ENCODE measurements at regions of chr17 and their contacts with region 1.

Region 1: GRCh38 chr17:8887834-8888703 is 20.6 kb upstream of the PIK3R6 start:
- DNase-seq: peak; percentile 69 to 84
- ATAC-seq: peak; percentile 85 to 96
- H3K4me3 ChIP-seq: no peak overlapping the region
- H3K27ac ChIP-seq: 0 out of 6 replicates have a peak overlapping the region, but pooled peaks of 1 of the 2 experiments have one; percentile 11
- H3K4me1 ChIP-seq: 0 out of 3 replicates have a peak, but pooled peaks cover 3% of the 10 kb centered on the region
- CTCF ChIP-seq: peak; percentile 65; the same call in 2 of the 3 replicates
- EP300 ChIP-seq: no peak
- POLR2A ChIP-seq: no peak
- RAD21 ChIP-seq: peak; percentile 72 to 75

Region 2: DNA sequence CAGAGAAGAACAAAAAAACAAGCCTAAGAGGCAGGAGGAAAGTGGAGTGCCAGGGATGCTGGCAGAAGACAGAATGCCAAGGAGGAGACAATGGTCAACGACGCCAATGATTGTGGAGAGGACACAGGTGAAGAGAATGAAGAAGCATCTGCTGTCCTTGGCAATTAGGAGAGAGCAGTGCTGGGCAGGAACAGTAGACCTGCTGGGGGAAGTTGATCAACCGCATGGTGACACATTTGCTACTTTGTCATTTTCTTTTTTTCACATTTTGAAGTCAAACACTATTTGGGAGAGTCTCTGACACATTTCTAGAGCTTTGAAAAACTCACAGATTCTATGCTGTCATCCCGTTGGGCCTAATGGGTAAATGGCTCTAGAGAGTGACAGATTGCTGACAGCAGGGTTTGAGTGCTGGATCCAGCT is 19.5 kb before region 1 on chr17:
- CTCF ChIA-PET with region 1: interaction called, 31 read pairs
- POLR2A ChIA-PET with region 1: no interaction called
- DNase-seq: no peak
- ATAC-seq: no peak
- H3K4me3 ChIP-seq: no peak overlapping the region
- H3K27ac ChIP-seq: no peak overlapping the region
- H3K4me1 ChIP-seq: peaks cover 7% of the 10 kb centered on the region
- CTCF ChIP-seq: no peak
- EP300 ChIP-seq: no peak
- POLR2A ChIP-seq: no peak
- RAD21 ChIP-seq: no peak

Region 3: DNA sequence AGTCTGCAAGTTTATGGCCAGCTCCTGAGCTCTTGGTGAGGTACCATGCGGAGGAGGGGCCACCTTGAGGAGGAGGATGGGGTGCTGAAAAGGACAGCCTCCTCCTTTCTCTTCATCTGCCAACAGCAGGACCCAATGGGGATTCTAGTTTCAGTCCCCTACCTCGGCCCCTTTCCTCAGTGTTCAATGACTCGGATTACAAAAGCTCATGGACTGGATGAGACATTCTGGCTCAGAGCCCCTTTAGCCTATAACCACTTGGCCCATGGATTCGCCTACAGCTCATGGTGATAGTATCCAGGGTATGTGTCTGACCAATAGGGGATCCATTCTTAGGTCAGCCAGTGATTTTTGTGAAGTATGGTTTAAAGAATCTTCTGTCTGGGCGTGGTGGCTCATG is 12.1 kb before region 1 on chr17:
- CTCF ChIA-PET with region 1: interaction called, 40 read pairs
- POLR2A ChIA-PET with region 1: no interaction called
- DNase-seq: no peak
- ATAC-seq: no peak
- H3K4me3 ChIP-seq: no peak overlapping the region
- H3K27ac ChIP-seq: no peak overlapping the region
- H3K4me1 ChIP-seq: peaks cover 7% of the 10 kb centered on the region
- CTCF ChIP-seq: no peak
- EP300 ChIP-seq: no peak
- POLR2A ChIP-seq: no peak
- RAD21 ChIP-seq: no peak

Region 4: GRCh38 chr17:8900626-8901585 is 12.8 kb after region 1 on chr17:
- CTCF ChIA-PET with region 1: interaction called, 40 read pairs
- POLR2A ChIA-PET with region 1: no interaction called
- DNase-seq: no peak
- ATAC-seq: no peak
- H3K4me3 ChIP-seq: no peak overlapping the region
- H3K27ac ChIP-seq: no peak overlapping the region
- H3K4me1 ChIP-seq: no peaks in the 10 kb centered on the region
- CTCF ChIP-seq: no peak
- EP300 ChIP-seq: no peak
- POLR2A ChIP-seq: no peak
- RAD21 ChIP-seq: no peak

Region 5: DNA sequence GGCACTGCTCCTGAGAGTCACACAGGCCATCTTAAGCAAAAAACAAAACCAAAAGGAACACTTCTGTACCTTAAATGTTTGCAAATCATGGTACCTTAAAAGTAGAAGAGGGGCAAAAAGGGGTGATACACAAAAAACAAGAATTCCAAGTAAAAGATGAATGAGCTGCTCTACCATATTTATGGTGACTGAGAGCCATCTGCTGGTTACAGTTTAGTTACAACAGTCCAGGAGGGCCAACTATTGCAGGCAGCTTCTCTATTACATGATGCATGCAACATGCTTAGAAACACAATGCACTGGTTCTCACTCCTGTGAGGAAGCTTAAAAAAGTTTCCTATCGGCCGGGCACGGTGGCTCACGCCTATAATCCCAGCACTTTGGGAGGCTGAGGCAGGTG is 634.0 kb after region 1 on chr17:
- CTCF ChIA-PET with region 1: interaction called, 19 read pairs
- POLR2A ChIA-PET with region 1: interaction called, 4 read pairs
- DNase-seq: peak; percentile 31 to 60
- ATAC-seq: peak; percentile 85 to 91
- H3K4me3 ChIP-seq: no peak overlapping the region
- H3K27ac ChIP-seq: no peak overlapping the region
- H3K4me1 ChIP-seq: no peaks in the 10 kb centered on the region
- CTCF ChIP-seq: peak; percentile 83
- EP300 ChIP-seq: no peak
- POLR2A ChIP-seq: no peak
- RAD21 ChIP-seq: peak; percentile 87 to 88